Aorta (tissue), 5 donors: ENCODE measurements at regions of chr1 and their contacts with region 1.

Region 1: DNA sequence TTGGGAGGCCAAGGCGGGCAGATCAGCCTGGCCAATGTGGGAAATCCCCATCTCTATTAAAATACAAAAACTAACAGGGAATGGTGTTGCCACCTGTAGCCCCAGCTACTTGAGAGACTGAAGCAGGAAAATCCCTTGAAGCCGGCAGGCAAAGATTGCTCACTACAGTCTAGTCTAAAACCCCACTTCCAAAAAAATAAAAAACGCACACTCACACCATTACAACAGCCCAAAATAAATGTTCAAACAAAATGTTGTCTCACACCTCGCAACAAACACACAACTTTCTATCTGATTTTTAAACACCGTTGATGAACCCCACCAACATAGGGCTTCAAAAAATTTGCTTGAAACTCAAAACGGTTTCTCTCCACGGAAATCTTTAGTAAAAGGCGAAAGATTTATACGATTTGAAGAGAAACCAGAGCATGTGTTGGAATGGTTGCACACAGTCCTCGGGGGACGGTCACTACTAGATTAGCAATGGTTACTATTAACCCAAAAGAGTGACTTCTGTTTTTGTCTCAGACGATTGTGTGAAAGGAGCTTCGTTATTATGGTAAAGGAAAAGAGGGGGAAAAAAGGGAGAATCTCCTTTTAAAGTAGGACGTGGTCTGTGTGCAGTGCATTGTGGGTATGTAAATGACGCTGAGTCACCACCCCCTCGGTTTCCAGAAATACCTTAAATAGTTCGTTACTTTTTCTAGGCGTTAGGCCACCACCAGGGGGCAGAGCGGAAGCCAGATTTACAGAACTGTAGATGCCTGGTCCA is at the start of gene RNU5D-1:
- DNase-seq: peak; percentile 96 to 98
- ATAC-seq: peak; percentile 94
- H3K4me3 ChIP-seq: no peak within 1 kb of the TSS
- H3K27ac ChIP-seq: peak within 1 kb of the TSS; percentile 57 to 86
- H3K4me1 ChIP-seq: no peaks in the 10 kb centered on the region
- H3K27me3 ChIP-seq: no peaks in the 10 kb centered on the region
- total RNA-seq, gene RNU5D-1: not detected

Region 2: GRCh38 chr1:44799770-44800584 is 69.0 kb after region 1 on chr1 and contains the start of gene PLK3:
- intact Hi-C with region 1: loop called in 1 of 2 experiments (anchors 10 kb)
- DNase-seq: peak; percentile 98 to 99
- ATAC-seq: peak; percentile 96
- H3K4me3 ChIP-seq: peak within 1 kb of the TSS; percentile 73 to 97
- H3K27ac ChIP-seq: peak within 1 kb of the TSS; percentile 92 to 95
- H3K4me1 ChIP-seq: no peaks in the 10 kb centered on the region
- H3K27me3 ChIP-seq: no peaks in the 10 kb centered on the region
- total RNA-seq, gene PLK3: 28.8 to 84.3 TPM

Region 3: DNA sequence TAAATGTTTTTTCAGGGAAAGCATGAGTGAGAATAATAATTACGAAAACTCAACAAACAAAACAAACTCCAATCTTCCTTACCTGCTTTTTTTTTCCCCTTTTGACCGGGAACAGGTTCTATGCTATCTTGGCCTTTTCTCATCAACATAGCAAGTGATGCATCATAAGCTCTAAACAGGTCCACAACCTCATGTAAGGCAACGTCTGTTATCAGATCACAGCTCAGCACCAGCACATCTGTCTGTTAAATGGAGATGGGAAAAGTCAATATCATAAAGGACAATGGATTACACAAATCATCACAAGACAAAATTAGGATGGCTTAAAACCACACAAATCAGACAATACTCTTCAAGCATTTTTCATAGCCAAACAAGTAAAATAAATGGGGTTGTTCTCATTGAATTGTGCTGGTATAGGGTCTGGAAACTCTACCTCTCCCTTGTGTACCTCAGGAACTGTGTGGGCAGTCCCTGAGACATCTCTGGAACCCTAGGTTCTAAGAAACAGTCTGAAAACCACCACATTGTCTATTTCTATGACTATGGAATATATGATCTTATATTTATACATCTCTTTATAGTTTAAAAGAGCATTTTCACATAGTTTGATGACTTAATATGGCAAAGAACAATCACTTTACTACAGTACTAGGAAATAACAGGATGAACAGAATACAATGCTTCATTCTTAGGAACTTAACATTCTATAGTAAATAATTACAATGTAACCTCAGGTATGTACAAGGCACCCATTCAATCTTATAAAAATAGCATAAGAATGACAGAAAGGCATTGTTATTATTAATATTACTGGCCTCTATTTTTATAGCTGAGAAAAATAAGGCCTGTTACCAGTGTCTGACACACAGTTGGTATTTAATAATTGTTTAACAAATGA is 210.7 kb after region 1 on chr1:
- intact Hi-C with region 1: no loop called
- DNase-seq: no peak
- ATAC-seq: no peak
- H3K4me3 ChIP-seq: no peak overlapping the region
- H3K27ac ChIP-seq: no peak overlapping the region
- H3K4me1 ChIP-seq: peaks cover 2 to 8% of the 10 kb centered on the region in 2 donors
- H3K27me3 ChIP-seq: no peaks in the 10 kb centered on the region

Region 4: GRCh38 chr1:44994309-44994898 is 263.5 kb after region 1 on chr1:
- intact Hi-C with region 1: loop called in 1 of 2 experiments (anchors 5 kb)
- DNase-seq: no peak
- ATAC-seq: no peak
- H3K4me3 ChIP-seq: no peak overlapping the region
- H3K27ac ChIP-seq: no peak overlapping the region
- H3K4me1 ChIP-seq: no peaks in the 10 kb centered on the region
- H3K27me3 ChIP-seq: no peaks in the 10 kb centered on the region